Activated CD8-positive, alpha-beta T cell treated with anti-CD3 and anti-CD28 coated beads for 36 hours (primary cell): ENCODE measurements at regions of chr6 and their contacts with region 1.

Region 1: DNA sequence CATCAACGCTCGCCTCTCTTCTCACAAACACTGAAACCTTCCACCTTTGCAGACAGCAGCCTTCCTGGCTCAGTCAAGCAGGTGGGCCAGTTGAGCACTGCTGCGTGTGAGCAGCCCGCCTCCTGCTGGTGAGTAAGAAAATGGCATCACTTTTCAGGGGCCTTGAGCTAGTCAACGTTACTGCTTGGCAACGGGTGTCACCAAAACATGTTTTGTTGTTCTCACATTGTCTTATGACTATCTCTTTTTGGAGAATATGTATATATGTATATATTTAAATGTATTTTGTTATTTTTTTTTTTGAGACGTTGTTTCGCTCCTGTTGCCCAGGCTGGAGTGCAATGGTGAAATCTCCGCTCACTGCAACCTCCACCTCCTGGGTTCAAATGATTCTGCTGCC is 97.0 kb upstream of the AGPAT4 start:
- DNase-seq: peak; percentile 71
- ATAC-seq: peak; percentile 87
- H3K4me3 Mint-ChIP-seq: no peak overlapping the region
- H3K27ac Mint-ChIP-seq: no peak overlapping the region
- H3K4me1 Mint-ChIP-seq: no peaks in the 10 kb centered on the region
- H3K27me3 Mint-ChIP-seq: no peaks in the 10 kb centered on the region
- CTCF ChIP-seq: peak; percentile 82

Region 2: GRCh38 chr6:160750276-160750689 is 620.6 kb before region 1 on chr6:
- CTCF ChIA-PET with region 1: interaction called, 5 read pairs
- POLR2A ChIA-PET with region 1: no interaction called
- intact Hi-C with region 1: loop called (anchors 5 kb)
- DNase-seq: peak; percentile 41
- ATAC-seq: no peak
- H3K4me3 Mint-ChIP-seq: no peak overlapping the region
- H3K27ac Mint-ChIP-seq: no peak overlapping the region
- H3K4me1 Mint-ChIP-seq: no peaks in the 10 kb centered on the region
- H3K27me3 Mint-ChIP-seq: peaks cover 13% of the 10 kb centered on the region
- CTCF ChIP-seq: peak; percentile 35

Region 3: GRCh38 chr6:161101517-161101916 is 269.4 kb before region 1 on chr6:
- CTCF ChIA-PET with region 1: interaction called, 20 read pairs
- POLR2A ChIA-PET with region 1: no interaction called
- intact Hi-C with region 1: no loop called
- DNase-seq: no peak
- ATAC-seq: no peak
- H3K4me3 Mint-ChIP-seq: no peak overlapping the region
- H3K27ac Mint-ChIP-seq: no peak overlapping the region
- H3K4me1 Mint-ChIP-seq: peaks cover 2% of the 10 kb centered on the region
- H3K27me3 Mint-ChIP-seq: no peaks in the 10 kb centered on the region
- CTCF ChIP-seq: no peak

Region 4: DNA sequence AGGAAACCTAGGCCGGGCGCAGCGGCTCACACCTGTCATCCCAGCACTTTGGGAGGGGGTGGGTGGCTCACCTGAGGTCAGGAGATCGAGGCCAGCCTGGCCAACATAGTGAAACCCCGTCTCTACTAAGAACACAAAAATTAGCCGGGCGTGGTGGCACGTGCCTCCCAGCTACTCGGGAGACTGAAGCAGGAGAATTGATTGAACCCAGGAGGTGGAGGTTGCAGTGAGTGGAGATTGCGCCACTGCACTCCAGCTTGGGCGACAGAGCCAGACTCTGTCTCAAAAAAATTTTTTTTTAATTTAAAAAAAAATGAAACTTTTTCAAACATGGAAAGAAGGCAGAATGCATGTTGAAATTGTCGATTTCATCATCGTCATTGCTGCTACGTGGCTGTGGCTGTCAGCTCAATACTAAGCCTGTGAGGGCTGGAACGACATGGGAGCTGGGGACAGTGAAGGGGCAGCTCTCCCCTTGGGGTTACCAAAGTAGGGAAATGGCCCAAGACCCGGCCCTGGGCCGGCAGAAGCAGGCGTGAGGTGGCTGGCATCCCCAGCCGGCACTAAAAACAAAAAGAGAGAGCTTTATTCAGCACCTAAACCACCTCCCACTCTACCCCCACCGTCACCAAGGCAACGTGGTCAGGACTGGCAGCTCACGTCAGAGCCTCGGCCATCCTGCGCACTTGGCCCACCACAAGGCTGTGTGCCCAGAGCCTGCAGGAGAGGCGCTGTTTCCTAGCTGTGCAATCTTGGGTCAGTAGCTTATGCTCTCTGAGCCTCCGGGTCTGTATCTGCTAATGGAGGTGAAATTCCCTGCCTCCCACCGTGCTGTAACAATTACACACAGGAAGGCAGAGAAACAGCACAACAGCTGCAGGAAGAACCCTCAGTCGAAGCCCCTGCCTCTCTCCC is 127.8 kb before region 1 on chr6:
- CTCF ChIA-PET with region 1: interaction called, 12 read pairs
- POLR2A ChIA-PET with region 1: no interaction called
- intact Hi-C with region 1: no loop called
- DNase-seq: peak; percentile 74
- ATAC-seq: peak; percentile 86
- H3K4me3 Mint-ChIP-seq: no peak overlapping the region
- H3K27ac Mint-ChIP-seq: no peak overlapping the region
- H3K4me1 Mint-ChIP-seq: peaks cover 2% of the 10 kb centered on the region
- H3K27me3 Mint-ChIP-seq: no peaks in the 10 kb centered on the region
- CTCF ChIP-seq: no peak

Region 5: DNA sequence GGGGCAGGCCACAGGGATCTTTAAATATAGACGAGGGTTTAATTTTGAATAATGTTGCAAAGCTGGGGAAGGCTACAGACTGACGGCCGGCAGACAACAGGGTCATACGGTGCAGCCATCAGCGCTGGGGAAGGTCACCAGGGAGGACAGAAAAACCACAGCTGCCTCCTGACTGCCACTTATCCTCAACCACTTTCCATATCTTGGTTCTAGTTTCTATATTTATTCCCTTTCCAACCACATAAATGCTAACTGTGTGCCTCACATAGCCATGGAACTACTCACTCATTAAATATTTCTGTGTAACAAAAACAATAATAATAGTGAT is 11.3 kb before region 1 on chr6:
- CTCF ChIA-PET with region 1: interaction called, 23 read pairs
- POLR2A ChIA-PET with region 1: no interaction called
- intact Hi-C with region 1: no loop called
- DNase-seq: no peak
- ATAC-seq: no peak
- H3K4me3 Mint-ChIP-seq: no peak overlapping the region
- H3K27ac Mint-ChIP-seq: no peak overlapping the region
- H3K4me1 Mint-ChIP-seq: peaks cover 2% of the 10 kb centered on the region
- H3K27me3 Mint-ChIP-seq: no peaks in the 10 kb centered on the region
- CTCF ChIP-seq: no peak